T-cell (primary cell): ENCODE measurements at regions of chr2 and their contacts with region 1.

Region 1: DNA sequence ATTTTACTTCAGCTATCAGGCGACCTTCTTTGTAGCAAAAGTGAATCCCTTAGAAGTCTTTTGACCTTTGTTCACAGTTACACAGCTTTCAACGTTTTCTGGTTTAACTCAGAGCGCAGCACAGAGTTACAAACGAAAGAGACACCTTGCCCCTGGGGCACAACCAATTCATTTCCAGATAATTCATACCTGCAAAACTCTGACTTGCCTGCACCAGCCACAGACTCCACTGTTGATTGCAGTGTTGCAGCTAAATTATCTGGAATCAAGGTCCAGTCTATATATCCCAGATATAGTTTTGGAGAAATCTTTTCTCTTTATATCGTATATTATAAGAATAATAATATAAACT is 358.6 kb upstream of the VWC2L start:
- DNase-seq: no peak
- ATAC-seq: no peak
- H3K4me3 ChIP-seq: no peak overlapping the region
- H3K4me3 Mint-ChIP-seq: no peak overlapping the region
- H3K27ac ChIP-seq: no peak overlapping the region
- H3K27ac Mint-ChIP-seq: no peak overlapping the region
- H3K4me1 ChIP-seq: no peaks in the 10 kb centered on the region
- H3K4me1 Mint-ChIP-seq: no peaks in the 10 kb centered on the region
- H3K27me3 ChIP-seq: no peaks in the 10 kb centered on the region
- H3K27me3 Mint-ChIP-seq: no peaks in the 10 kb centered on the region

Region 2: GRCh38 chr2:212540341-212540740 is 1511.9 kb before region 1 on chr2:
- CTCF ChIA-PET with region 1: no interaction called
- POLR2A ChIA-PET with region 1: interaction called in 1 of 2 experiments, 11 read pairs
- DNase-seq: no peak
- ATAC-seq: no peak
- H3K4me3 ChIP-seq: no peak overlapping the region
- H3K4me3 Mint-ChIP-seq: no peak overlapping the region
- H3K27ac ChIP-seq: no peak overlapping the region
- H3K27ac Mint-ChIP-seq: no peak overlapping the region
- H3K4me1 ChIP-seq: peaks cover 0 to 8% of the 10 kb centered on the region in 2 experiments
- H3K4me1 Mint-ChIP-seq: peaks cover 7 to 21% (median 15%) of the 10 kb centered on the region in 3 donors
- H3K27me3 ChIP-seq: peaks cover 8 to 34% of the 10 kb centered on the region in 2 experiments
- H3K27me3 Mint-ChIP-seq: peaks cover 33 to 44% of the 10 kb centered on the region in 2 donors